CD4-positive, alpha-beta memory T cell (primary cell): ENCODE measurements at regions of chr7 and their contacts with region 1.

Region 1: DNA sequence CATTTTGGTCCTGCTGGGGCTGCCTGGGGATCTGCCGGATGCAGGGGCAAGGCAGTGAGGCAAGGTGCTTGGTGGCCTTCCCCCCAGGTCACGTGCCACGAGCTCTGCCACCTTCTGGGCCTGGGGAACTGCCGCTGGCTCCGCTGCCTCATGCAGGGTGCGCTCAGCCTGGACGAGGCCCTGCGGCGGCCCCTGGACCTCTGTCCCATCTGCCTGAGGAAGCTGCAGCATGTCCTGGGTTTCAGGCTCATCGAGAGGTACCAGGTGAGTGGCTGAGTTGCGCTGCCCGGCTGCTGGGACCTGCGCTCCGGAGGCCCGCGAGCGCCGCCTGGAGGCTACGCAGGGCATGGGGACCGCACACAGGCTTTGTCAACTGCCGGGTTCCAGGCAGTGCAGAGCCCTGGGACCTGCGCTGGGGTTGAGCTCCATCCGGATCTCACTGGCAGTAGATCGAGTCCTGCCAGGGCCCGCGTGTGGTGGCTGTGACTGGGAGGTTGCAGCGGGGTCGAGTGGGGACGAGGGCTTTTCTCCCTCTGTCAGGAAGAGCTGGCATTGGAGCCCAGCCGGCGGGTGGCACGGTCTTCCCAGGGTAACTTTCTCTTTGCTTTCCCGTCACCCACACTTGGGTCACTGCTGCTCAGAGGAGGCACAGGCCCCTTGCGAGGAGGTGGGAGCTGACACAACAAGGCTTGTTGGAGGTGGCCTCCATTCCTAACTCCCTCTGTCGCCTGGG is 21.7 kb downstream of the AMZ1 start:
- DNase-seq: peak; percentile 75 to 81 (median 79)
- H3K4me3 ChIP-seq: peak overlapping the region in 1 of 2 donors; percentile 50
- H3K4me3 Mint-ChIP-seq: peak overlapping the region; percentile 69 to 87 (median 78)
- H3K27ac ChIP-seq: peak overlapping the region; percentile 42
- H3K27ac Mint-ChIP-seq: peak overlapping the region in 6 of 7 donors; percentile 86 to 96 (median 90)
- H3K4me1 ChIP-seq: peaks cover 41% of the 10 kb centered on the region
- H3K4me1 Mint-ChIP-seq: peaks cover 19 to 40% (median 27%) of the 10 kb centered on the region in 4 donors
- H3K27me3 ChIP-seq: no peaks in the 10 kb centered on the region
- H3K27me3 Mint-ChIP-seq: no peaks in the 10 kb centered on the region

Region 2: DNA sequence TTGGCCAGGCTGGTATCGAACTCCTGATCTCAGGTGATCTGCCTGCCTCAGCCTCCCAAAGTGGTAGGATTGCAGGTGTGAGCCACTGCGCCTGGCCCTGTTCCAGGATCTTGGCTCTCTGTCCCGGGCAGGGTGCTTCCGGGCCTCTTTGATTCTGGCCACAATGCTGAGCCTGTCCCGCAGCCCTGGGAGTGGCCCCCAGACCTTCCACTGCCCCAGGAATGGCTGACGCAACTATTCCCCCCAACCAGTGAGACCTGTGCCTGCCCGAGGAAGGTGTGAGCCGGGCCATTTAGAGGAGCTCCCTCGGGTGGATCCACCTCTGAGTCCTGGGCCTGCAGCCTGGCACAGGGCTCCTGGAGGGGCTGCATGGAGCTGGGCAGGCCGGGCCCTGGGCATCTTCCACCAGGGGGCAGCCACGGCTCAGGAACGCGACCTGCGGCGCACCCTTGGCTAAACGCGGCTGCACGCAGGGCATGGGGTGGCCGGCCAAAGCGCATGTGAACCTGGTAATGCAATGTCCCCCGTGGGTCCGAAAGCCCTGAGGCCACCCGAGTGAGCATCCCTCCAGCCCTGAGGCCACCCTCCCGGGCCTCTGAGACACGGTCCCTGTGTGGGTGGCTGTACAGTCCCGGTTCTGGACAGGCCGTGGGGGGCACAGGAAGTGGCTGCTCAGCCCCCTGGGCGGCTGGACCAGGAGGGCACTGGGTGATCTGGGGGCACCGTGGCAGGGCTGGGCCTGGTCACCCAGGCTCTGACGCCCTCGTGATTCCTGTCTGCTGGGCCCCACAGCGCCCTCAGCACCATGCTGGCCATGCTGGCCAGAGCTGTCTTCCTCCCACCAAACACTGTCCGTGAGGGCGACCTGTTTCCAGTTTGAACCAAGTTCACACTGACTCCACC is 258.3 kb before region 1 on chr7:
- CTCF ChIA-PET with region 1: interaction called, 46 read pairs
- POLR2A ChIA-PET with region 1: interaction called, 9 read pairs
- intact Hi-C with region 1: loop called (anchors 1 kb)
- DNase-seq: peak; percentile 60 to 68 (median 64)
- H3K4me3 ChIP-seq: peak overlapping the region in 1 of 2 donors; percentile 32
- H3K4me3 Mint-ChIP-seq: peak overlapping the region in 6 of 8 donors; percentile 15 to 67 (median 52)
- H3K27ac ChIP-seq: no peak overlapping the region
- H3K27ac Mint-ChIP-seq: peak overlapping the region in 1 of 7 donors; percentile 46
- H3K4me1 ChIP-seq: peaks cover 10% of the 10 kb centered on the region
- H3K4me1 Mint-ChIP-seq: peaks cover 0 to 9% (median 5%) of the 10 kb centered on the region in 4 donors
- H3K27me3 ChIP-seq: no peaks in the 10 kb centered on the region
- H3K27me3 Mint-ChIP-seq: no peaks in the 10 kb centered on the region

Region 3: GRCh38 chr7:2555121-2556052 is 154.3 kb before region 1 on chr7 and contains the start of gene BRAT1:
- CTCF ChIA-PET with region 1: interaction called, 4 read pairs
- POLR2A ChIA-PET with region 1: interaction called, 3 read pairs
- intact Hi-C with region 1: loop called (anchors 5 kb)
- DNase-seq: peak; percentile 91 to 95 (median 92)
- H3K4me3 ChIP-seq: peak within 1 kb of the TSS; percentile 52 to 82
- H3K4me3 Mint-ChIP-seq: peak within 1 kb of the TSS; percentile 84 to 91 (median 86)
- H3K27ac ChIP-seq: peak within 1 kb of the TSS; percentile 97
- H3K27ac Mint-ChIP-seq: peak within 1 kb of the TSS; percentile 81 to 92 (median 85)
- H3K4me1 ChIP-seq: peaks cover 49% of the 10 kb centered on the region
- H3K4me1 Mint-ChIP-seq: peaks cover 18 to 51% (median 31%) of the 10 kb centered on the region in 4 donors
- H3K27me3 ChIP-seq: no peaks in the 10 kb centered on the region
- H3K27me3 Mint-ChIP-seq: no peaks in the 10 kb centered on the region
- total RNA-seq, gene BRAT1: 37.0 to 41.4 TPM

Region 4: DNA sequence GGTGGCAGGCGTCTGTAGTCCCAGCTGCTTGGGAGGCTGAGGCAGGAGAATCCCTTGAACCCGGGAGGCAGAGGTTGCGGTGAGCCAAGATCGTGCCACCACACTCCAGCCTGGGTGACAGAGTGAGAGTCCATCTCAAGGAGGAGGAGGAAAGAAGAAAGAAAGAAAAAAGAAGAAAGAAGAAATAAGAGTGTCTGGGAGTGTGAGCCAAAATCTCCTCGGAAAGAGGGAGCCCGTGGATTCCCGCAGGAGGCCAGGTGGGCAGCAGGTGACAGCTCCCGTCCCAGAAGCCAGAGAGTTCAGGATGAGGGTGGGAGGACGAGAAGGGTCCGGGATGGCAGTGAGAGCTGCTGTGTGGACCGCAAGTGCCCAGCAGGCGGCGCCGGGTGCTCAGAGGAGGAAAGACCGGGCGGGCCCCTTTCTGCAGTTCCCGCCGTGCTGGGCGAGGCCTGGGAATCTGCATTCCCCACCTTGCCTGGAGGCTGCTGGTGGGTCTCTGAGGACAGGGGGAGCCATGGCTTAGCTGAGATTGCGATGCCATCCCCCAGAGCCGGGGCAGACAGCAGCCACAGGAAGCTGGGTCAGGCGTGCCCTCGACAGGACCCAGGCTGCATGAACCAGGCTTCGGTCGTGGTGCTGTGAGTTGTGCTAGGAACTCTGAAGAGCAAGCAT is 38.9 kb before region 1 on chr7:
- CTCF ChIA-PET with region 1: interaction called, 220 read pairs
- POLR2A ChIA-PET with region 1: interaction called, 26 read pairs
- intact Hi-C with region 1: loop called (anchors 1 kb)
- DNase-seq: peak; percentile 53 to 62 (median 56)
- H3K4me3 ChIP-seq: no peak overlapping the region
- H3K4me3 Mint-ChIP-seq: peak overlapping the region in 3 of 8 donors; percentile 33 to 56 (median 43)
- H3K27ac ChIP-seq: no peak overlapping the region
- H3K27ac Mint-ChIP-seq: peak overlapping the region in 2 of 7 donors; percentile 29 to 53
- H3K4me1 ChIP-seq: peaks cover 7% of the 10 kb centered on the region
- H3K4me1 Mint-ChIP-seq: peaks cover 0 to 12% (median 4%) of the 10 kb centered on the region in 4 donors
- H3K27me3 ChIP-seq: no peaks in the 10 kb centered on the region
- H3K27me3 Mint-ChIP-seq: peaks cover 8 to 11% of the 10 kb centered on the region in 2 donors

Region 5: DNA sequence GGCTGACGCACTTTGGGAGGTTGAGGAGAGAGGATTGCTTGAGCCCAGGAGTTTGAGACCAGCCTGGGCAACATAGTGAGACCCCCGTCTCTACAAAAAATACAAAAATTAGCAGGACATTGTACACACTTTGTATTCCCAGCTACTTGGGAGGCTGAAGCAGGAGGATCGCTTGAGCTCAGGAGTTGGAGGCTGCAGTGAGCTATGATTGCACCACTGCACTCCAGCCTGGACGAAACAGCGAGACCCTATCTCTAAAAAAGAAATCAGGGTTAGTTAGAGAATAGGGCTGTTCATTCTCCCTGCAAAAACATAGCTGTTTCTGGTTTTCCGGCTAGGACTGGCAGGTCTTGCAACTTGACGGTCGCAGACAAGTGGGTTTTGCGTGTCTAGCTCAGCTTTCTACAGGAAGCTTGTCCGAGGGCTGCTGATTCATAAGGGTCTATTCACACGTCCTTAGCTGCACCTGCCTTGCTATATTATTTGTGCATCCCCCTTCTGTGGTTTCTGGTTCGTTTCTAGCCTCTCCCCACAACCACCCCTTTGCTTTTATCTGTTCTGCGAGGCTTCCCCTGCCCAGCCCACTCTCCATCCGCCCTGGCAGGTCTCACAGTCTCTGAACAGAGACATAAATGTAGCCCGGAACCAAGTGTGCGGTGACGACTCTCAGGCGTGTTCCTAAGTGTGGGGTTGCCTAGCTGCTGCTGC is 11.0 kb before region 1 on chr7:
- CTCF ChIA-PET with region 1: interaction called, 85 read pairs
- POLR2A ChIA-PET with region 1: interaction called, 57 read pairs
- intact Hi-C with region 1: no loop called
- DNase-seq: peak; percentile 60 to 80 (median 65)
- H3K4me3 ChIP-seq: peak overlapping the region; percentile 21 to 22
- H3K4me3 Mint-ChIP-seq: peak overlapping the region; percentile 58 to 92 (median 77)
- H3K27ac ChIP-seq: peak overlapping the region; percentile 33
- H3K27ac Mint-ChIP-seq: peak overlapping the region; percentile 12 to 84 (median 55)
- H3K4me1 ChIP-seq: peaks cover 21% of the 10 kb centered on the region
- H3K4me1 Mint-ChIP-seq: peaks cover 18 to 25% (median 22%) of the 10 kb centered on the region in 4 donors
- H3K27me3 ChIP-seq: no peaks in the 10 kb centered on the region
- H3K27me3 Mint-ChIP-seq: no peaks in the 10 kb centered on the region

Region 6: GRCh38 chr7:2779086-2779485 is 69.4 kb after region 1 on chr7:
- CTCF ChIA-PET with region 1: no interaction called
- POLR2A ChIA-PET with region 1: no interaction called
- intact Hi-C with region 1: no loop called
- DNase-seq: no peak
- H3K4me3 ChIP-seq: no peak overlapping the region
- H3K4me3 Mint-ChIP-seq: no peak overlapping the region
- H3K27ac ChIP-seq: no peak overlapping the region
- H3K27ac Mint-ChIP-seq: no peak overlapping the region
- H3K4me1 ChIP-seq: no peaks in the 10 kb centered on the region
- H3K4me1 Mint-ChIP-seq: peaks cover 0 to 9% (median 7%) of the 10 kb centered on the region in 4 donors
- H3K27me3 ChIP-seq: no peaks in the 10 kb centered on the region
- H3K27me3 Mint-ChIP-seq: no peaks in the 10 kb centered on the region

Region 7: DNA sequence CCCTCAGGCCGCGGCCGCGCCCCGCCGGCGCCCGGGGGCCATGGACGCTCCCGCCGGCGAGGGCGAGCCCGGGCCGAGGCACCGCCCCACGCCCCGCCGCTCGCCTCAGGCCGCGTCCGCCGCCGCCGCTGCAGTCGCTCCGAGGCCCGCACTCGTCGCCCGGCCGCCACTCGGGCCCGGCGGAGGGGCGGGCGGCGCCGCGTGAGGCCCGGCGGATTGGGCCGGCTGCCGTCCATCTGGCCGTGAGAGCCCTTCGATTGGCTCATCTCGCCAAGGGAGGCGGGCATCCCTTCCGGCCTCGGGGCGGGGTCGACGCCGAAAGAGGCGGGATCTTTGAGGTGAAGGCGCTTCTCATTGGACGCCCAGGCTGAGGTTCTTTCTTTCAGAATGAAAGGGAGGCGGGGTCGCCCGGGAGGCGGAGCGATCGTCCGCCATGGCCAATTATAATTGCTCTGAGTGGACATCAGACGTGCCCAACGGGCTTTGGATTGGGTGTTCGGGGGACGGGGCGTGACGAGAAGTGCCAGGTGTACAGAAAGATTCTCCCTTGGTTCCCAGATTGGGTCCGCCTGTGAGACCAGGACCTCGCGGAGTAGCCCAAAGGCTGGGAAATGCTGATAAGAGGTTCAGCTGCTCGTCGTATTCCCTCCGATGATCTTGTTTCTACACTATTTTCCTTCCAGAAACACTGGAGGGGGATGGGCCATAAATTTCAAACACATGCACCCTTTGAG is 134.6 kb after region 1 on chr7 and contains the start of gene GNA12:
- CTCF ChIA-PET with region 1: interaction called, 3 read pairs
- POLR2A ChIA-PET with region 1: no interaction called
- intact Hi-C with region 1: loop called (anchors 5 kb)
- DNase-seq: peak; percentile 97 to 98 (median 98)
- H3K4me3 ChIP-seq: peak within 1 kb of the TSS; percentile 51 to 61
- H3K4me3 Mint-ChIP-seq: peak within 1 kb of the TSS; percentile 84 to 97 (median 88)
- H3K27ac ChIP-seq: peak within 1 kb of the TSS; percentile 32
- H3K27ac Mint-ChIP-seq: peak within 1 kb of the TSS; percentile 53 to 90 (median 79)
- H3K4me1 ChIP-seq: peaks cover 19% of the 10 kb centered on the region
- H3K4me1 Mint-ChIP-seq: peaks cover 25 to 53% (median 40%) of the 10 kb centered on the region in 4 donors
- H3K27me3 ChIP-seq: no peaks in the 10 kb centered on the region
- H3K27me3 Mint-ChIP-seq: no peaks in the 10 kb centered on the region
- total RNA-seq, gene GNA12: 14.9 to 16.6 TPM